ENCODE measurements at regions of chr12 and their contacts with region 1.

Region 1: DNA sequence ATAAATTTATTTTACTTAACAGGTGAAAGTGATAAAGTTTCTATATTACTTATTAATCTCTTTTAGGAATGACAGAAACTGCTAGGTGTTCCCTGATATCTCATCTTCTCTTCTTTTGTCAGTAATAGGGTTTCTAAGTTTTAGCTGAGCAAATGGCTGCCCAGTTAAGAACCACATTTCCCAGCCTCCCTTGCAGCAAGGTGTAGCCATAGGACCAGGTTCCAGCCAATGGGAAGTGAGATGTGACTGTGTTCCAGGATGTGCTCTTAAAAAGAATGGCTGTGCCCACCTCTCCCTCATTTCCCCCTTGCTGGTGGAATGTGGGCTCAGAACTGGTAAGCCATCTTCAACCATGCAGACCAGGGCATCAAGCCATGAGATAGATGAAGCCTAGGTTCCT is 165.6 kb downstream of the HELB start:
- DNase-seq: no peak
- H3K4me3 ChIP-seq: no peak overlapping the region
- H3K27ac ChIP-seq: no peak overlapping the region
- H3K4me1 ChIP-seq: no peaks in the 10 kb centered on the region
- H3K27me3 ChIP-seq: no peaks in the 10 kb centered on the region
- CTCF ChIP-seq: no peak
- POLR2A ChIP-seq: no peak

Region 2: DNA sequence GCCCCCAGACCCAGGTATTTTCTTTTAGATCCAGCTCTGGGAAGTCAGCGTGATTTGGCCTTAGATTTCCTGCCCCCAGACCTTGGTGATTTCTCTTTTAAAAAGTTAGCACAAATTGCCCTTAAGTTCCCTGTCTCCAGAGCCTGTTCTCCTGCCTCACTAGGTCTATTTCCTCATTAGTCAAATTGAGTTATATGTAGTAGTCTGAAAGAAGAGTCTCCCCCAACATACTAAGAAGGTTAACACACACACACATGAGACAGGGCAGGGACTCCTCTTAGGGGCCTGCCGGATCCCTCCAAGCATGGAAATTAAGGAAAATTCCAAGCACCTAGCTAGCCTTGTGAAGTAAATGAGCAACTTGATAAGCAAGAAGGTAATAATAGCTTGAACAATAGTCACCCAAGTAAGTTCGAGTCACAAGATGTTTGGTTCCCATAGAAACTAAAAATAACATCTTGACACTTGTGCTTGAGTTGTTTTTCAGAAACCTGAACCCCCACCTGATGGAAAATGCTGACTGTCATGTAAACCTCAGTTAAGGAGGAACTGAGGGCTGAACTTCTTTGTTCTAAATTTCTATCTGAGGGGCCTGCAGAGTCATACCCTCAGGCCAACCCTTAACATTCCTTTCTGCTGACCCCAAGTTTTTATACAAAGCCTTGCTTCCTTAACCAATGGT is 852.8 kb after region 1 on chr12:
- intact Hi-C with region 1: loop called (anchors 5 kb)
- DNase-seq: no peak
- H3K4me3 ChIP-seq: no peak overlapping the region
- H3K27ac ChIP-seq: no peak overlapping the region
- H3K4me1 ChIP-seq: no peaks in the 10 kb centered on the region
- H3K27me3 ChIP-seq: no peaks in the 10 kb centered on the region
- CTCF ChIP-seq: no peak
- POLR2A ChIP-seq: no peak